ENCODE measurements at regions of chr9 and their contacts with region 1.

Region 1: DNA sequence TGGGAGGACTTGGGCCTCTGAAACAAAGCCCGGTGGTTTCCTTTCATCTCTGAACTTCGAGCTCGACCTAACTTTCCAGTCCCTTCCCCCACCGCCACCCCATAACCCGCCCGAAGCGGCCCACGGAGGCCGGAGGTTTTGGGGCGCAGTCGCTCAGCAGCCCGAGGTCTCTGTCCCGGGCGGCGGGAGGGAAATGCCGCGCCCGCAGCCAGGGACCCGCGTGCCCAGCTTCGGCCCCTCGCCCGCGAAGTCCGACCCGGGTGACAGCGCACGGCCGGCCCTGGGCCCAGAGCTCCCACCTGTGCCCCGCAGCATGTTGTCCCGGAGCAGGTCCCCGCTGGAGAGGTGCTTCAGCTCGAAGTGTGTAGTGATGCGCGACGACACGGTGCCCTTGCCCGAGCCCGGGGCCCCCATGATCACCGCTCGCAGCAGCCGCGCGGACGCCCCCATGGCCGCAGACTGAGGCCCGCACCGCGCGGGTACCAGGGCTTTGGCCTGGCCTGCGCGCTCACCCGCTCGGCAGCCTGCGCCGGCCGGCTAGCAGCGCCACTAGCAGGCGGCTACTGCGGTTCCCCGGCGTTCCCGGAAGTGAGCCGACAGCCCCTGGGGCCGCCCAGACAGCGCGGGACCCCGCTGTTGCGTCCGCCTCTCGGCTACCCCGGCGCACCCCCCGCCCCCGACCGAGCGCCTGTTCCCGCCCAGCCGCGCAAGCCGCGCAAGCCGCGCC is at the start of gene AK3:
- DNase-seq: peak; percentile 49 to 94 (median 84)

Region 2: GRCh38 chr9:4662108-4662988 is 78.5 kb before region 1 on chr9 and contains the start of gene PLPP6:
- intact Hi-C with region 1: loop called (anchors 2 kb)
- DNase-seq: peak; percentile 73 to 95 (median 89)